ENCODE measurements at regions of chr6 and their contacts with region 1.

Region 1: DNA sequence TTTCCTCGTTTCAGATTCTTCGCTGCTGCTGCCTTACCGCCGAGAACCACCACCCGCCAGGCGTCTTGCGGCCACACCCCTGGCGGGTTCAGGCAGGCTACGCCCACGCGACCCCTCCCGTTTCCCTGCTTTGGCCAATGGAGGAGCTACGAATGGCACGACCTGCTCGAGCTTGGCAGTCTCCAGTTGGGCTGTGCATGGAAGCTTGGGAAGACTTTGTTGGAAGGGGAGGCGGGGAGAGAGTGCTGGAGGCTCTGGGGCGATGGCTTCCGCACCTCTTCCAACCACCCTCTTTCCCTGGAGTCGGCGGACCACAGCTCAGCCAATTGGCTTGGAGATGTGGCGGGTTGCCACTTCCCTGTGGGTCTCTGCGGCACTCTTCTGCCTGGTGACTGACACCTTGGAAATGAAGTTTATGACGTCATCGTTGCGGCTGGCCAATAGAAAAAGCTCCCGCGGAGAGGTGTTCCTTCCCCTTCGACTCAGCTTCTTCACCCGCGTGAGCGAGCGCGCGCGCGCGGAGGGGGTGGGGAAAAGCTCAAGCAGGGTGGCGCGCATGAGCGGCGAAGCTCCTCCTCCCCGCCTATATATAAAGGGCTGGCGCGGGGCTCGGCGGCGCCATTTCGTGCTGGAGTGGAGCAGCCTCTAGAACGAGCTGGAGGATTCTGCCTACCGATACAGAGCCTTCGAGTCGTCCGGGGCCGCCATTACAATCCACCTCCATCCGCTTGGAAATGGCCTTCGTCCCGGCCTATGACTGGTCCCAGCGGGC is 3.4 kb downstream of the BRD2 start:
- DNase-seq: peak; percentile 100
- ATAC-seq: peak; percentile 46
- H3K4me3 ChIP-seq: peak overlapping the region; percentile 93
- H3K27ac ChIP-seq: peak overlapping the region; percentile 100
- H3K4me1 ChIP-seq: peaks cover 1% of the 10 kb centered on the region; the same call in 1 of the 2 replicates
- H3K27me3 ChIP-seq: no peaks in the 10 kb centered on the region
- CTCF ChIP-seq: no peak
- EP300 ChIP-seq: peak; percentile 37; a peak in 2 of 4 replicates
- POLR2A ChIP-seq: peak; percentile 70
- RAD21 ChIP-seq: no peak

Region 2: DNA sequence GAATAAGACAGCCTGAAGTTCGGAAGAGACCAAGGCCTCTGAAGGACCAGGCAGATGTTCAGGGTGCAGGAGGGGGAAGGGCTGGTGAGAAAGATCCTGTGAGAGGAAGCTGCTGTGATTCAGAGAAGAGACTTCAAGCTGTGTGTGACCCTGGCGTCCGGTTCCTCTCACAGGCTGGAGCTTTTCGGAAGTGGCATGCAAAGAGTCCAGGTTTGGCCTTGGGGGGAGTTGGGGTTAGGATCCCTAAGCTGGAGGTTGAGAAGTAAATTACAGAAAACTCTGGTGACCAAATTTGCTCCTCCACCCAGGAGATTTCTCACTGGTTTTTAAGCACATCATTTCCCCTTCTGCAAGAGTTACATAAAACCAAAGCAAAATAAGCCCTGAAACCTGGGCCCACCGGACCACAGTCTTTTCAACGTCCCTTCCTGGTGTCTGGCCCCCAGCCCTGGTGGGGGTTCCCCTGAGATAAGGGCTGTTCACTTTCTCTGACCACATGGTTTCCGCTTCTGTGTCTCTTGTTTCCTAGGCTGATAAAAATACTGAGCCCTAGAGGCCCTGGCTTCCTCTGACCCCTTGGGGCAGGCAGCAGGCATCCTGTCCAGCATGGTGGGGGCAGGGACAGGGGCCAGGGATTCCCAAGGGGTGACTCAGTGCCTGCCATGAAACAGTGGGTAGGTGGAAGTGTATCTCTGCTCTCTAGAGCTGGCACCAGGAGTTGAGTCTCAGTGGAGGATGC is 1411.6 kb before region 1 on chr6:
- CTCF ChIA-PET with region 1: no interaction called
- POLR2A ChIA-PET with region 1: no interaction called
- RAD21 ChIA-PET with region 1: no interaction called
- SMC1A ChIA-PET with region 1: no interaction called
- in situ Hi-C with region 1: loop called (anchors 25 kb)
- intact Hi-C with region 1: no loop called
- DNase-seq: peak; percentile 88
- ATAC-seq: peak; percentile 77
- H3K4me3 ChIP-seq: peak overlapping the region; percentile 55; the same call in 1 of the 2 replicates
- H3K27ac ChIP-seq: peak overlapping the region; percentile 99
- H3K4me1 ChIP-seq: peaks cover 79% of the 10 kb centered on the region
- H3K27me3 ChIP-seq: no peaks in the 10 kb centered on the region
- CTCF ChIP-seq: 0 out of 6 replicates have a peak, but pooled peaks of 1 of the 3 experiments have one; percentile 2
- EP300 ChIP-seq: 0 out of 4 replicates have a peak, but pooled peaks of 1 of the 2 experiments have one; percentile 42
- POLR2A ChIP-seq: no peak; the same call in 1 of the 2 replicates
- RAD21 ChIP-seq: peak; percentile 1; the same call in 1 of the 2 replicates

Region 3: DNA sequence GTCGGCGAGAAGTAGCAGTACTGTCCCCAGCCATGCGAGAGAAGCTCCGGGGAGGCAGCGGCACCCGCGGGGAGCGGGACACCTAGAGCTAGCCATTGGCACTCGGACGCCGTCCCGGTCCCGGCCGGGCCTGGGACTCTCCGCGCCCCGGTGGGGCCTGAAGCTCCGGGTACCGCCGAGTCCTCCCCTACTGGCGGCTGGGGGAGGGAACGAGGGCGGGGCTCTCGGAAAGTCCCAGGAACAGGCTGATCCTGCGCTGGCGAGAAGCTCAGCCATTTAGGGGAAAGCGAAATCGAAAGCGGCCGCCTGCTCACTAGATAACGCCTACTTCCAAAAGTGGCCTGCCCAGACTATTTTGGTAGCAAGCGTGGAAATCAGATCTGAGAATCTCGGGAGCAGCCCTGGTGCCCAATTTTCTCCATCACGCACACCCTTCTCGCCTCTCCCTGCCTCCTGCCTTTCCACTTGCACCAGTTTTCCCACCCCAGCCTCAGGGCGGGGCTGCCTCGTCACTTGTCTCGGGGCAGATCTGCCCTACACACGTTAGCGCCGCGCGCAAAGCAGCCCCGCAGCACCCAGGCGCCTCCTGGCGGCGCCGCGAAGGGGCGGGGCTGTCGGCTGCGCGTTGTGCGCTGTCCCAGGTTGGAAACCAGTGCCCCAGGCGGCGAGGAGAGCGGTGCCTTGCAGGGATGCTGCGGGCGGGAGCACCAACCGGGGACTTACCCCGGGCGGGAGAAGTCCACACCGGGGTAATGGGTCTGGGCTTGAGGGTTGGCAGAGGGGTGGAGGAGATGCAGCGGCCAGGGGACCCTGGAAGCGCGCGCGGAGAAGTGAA is 118.0 kb before region 1 on chr6 and contains the starts of genes PSMB9 and TAP1:
- CTCF ChIA-PET with region 1: interaction called, 11 read pairs
- POLR2A ChIA-PET with region 1: interaction called, 36 read pairs
- RAD21 ChIA-PET with region 1: interaction called, 16 read pairs
- SMC1A ChIA-PET with region 1: interaction called, 8 read pairs
- in situ Hi-C with region 1: no loop called
- intact Hi-C with region 1: no loop called
- DNase-seq: peak; percentile 89
- ATAC-seq: peak; percentile 88
- H3K4me3 ChIP-seq: peak within 1 kb of the TSS; percentile 88
- H3K27ac ChIP-seq: peak within 1 kb of the TSS; percentile 100
- H3K4me1 ChIP-seq: peaks cover 32% of the 10 kb centered on the region
- H3K27me3 ChIP-seq: no peaks in the 10 kb centered on the region
- CTCF ChIP-seq: peak; percentile 79 to 84 (median 83)
- EP300 ChIP-seq: no peak
- POLR2A ChIP-seq: peak; percentile 83
- RAD21 ChIP-seq: peak; percentile 78
- polyA plus RNA-seq, gene PSMB9: 202 to 299 TPM
- polyA plus RNA-seq, gene TAP1: 33.4 to 60.0 TPM

Region 4: DNA sequence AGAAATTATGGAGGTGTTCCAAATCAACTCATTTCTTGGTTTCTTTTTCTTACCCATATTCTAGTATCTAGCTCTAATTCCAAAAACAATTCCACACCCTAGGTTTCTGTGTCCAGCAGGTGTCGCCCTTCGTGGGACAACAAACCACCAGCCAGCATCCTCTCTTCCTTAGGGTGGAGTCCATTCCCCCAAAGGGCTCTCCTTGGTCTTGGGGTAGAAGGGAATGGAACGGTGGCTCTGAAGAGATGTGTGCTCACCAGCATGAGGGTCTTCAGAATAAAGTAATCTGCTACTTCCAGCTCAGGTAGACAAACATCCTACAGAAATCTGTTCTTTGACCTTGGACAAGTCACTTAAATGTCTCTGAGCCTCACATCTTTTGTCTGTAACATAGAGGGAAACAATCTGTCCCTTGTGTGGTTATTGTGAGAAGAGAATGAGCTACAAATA is 38.1 kb before region 1 on chr6:
- CTCF ChIA-PET with region 1: interaction called, 48 read pairs
- POLR2A ChIA-PET with region 1: interaction called, 270 read pairs
- RAD21 ChIA-PET with region 1: interaction called, 50 read pairs
- SMC1A ChIA-PET with region 1: interaction called, 25 read pairs
- in situ Hi-C with region 1: no loop called
- intact Hi-C with region 1: no loop called
- DNase-seq: peak; percentile 38
- ATAC-seq: peak; percentile 70
- H3K4me3 ChIP-seq: no peak overlapping the region
- H3K27ac ChIP-seq: no peak overlapping the region
- H3K4me1 ChIP-seq: peaks cover 11% of the 10 kb centered on the region
- H3K27me3 ChIP-seq: no peaks in the 10 kb centered on the region; a peak in 1 of 4 replicates
- CTCF ChIP-seq: peak; percentile 75 to 85 (median 82)
- EP300 ChIP-seq: no peak
- POLR2A ChIP-seq: peak; percentile 46; the same call in 1 of the 2 replicates
- RAD21 ChIP-seq: peak; percentile 76

Region 5: GRCh38 chr6:32952817-32953739 is 18.7 kb before region 1 on chr6 and contains the start of gene HLA-DMA:
- CTCF ChIA-PET with region 1: interaction called, 243 read pairs
- POLR2A ChIA-PET with region 1: interaction called, 486 read pairs
- RAD21 ChIA-PET with region 1: interaction called, 224 read pairs
- SMC1A ChIA-PET with region 1: interaction called, 347 read pairs
- in situ Hi-C with region 1: no loop called
- intact Hi-C with region 1: loop called (anchors 2 kb)
- DNase-seq: peak; percentile 99
- ATAC-seq: peak; percentile 94
- H3K4me3 ChIP-seq: peak within 1 kb of the TSS; percentile 98
- H3K27ac ChIP-seq: peak within 1 kb of the TSS; percentile 90
- H3K4me1 ChIP-seq: peaks cover 44% of the 10 kb centered on the region
- H3K27me3 ChIP-seq: no peaks in the 10 kb centered on the region
- CTCF ChIP-seq: peak; percentile 71 to 77 (median 74)
- EP300 ChIP-seq: peak; percentile 32 to 67; a peak in 3 of 4 replicates
- POLR2A ChIP-seq: peak; percentile 98
- RAD21 ChIP-seq: peak; percentile 46
- polyA plus RNA-seq, gene HLA-DMA: 389 to 552 TPM

Region 6: DNA sequence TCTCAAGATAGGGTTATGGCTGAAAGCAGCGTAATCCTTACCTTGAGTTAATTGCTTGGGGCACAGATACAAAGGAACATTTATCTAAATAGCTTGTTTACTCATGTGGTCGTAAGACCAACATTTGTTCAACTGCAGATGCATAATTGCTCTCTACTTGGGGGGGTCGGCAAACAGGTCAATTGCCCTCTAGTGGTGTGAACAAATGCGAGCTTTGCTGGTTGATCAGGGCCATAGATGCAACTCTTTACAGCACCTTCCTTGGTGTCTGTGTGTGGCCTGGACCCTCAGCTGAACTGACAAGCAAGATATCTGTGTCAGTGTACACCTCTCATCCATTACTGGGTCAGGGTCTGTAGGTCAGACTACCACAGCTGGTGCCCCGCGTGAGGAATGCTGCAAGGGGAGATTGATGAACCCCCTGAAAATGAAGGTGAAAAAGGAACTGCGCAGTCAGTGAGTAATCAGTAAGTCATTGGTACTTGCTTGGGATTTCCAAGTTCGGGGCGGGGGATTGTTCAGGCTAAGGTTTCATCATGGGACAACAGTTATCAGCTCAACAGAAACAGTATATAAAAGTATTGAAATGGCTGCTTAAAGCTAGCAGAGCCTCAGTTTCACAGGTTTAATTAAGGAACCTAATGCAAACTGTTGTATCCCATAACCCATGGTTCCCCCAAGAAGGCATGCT is 77.7 kb after region 1 on chr6:
- CTCF ChIA-PET with region 1: no interaction called
- POLR2A ChIA-PET with region 1: no interaction called
- RAD21 ChIA-PET with region 1: no interaction called
- SMC1A ChIA-PET with region 1: no interaction called
- in situ Hi-C with region 1: no loop called
- intact Hi-C with region 1: no loop called
- DNase-seq: no peak
- ATAC-seq: peak; percentile 85
- H3K4me3 ChIP-seq: no peak overlapping the region
- H3K27ac ChIP-seq: no peak overlapping the region
- H3K4me1 ChIP-seq: no peaks in the 10 kb centered on the region
- H3K27me3 ChIP-seq: no peaks in the 10 kb centered on the region
- CTCF ChIP-seq: peak; percentile 23 to 54 (median 53)
- EP300 ChIP-seq: no peak
- POLR2A ChIP-seq: no peak
- RAD21 ChIP-seq: peak; percentile 43; the same call in 1 of the 2 replicates

Region 7: DNA sequence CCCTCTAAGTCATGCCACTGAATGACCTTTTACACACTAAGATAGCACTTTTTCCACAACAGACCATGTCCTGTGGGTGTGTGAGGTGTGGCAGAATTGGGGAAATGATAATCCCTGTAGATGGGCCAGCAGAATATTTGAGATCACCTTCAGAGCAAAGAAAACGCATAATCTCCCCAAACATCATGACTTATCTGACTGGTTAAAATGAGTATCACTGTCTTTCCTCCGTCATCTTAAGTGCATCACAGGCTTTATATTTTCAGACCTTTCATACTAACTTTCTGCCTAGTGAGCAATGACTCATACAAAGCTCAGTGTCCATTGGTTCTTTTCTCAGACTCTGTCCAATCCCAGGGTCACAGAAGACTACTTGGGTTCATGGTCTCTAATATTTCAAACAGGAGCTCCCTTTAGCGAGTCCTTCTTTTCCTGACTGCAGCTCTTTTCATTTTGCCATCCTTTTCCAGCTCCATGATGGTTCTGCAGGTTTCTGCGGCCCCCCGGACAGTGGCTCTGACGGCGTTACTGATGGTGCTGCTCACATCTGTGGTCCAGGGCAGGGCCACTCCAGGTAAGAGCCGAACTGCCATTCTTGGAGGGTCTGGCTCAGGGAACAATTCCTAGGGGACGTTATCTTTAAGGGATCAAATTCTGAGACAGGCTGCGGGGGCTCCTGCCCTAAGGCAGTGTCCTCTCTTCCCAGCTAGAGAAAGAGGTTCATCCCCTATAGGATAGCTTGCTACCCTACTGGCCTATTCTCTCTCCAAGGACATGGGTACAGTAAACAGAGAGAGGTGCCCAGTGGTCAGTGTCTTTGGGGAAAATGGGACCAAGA is 104.0 kb after region 1 on chr6 and contains the start of gene HLA-DPB1:
- CTCF ChIA-PET with region 1: interaction called, 3 read pairs
- POLR2A ChIA-PET with region 1: interaction called, 61 read pairs
- RAD21 ChIA-PET with region 1: interaction called, 12 read pairs
- SMC1A ChIA-PET with region 1: interaction called, 11 read pairs
- in situ Hi-C with region 1: no loop called
- intact Hi-C with region 1: no loop called
- DNase-seq: peak; percentile 96
- ATAC-seq: peak; percentile 81
- H3K4me3 ChIP-seq: peak within 1 kb of the TSS; percentile 82
- H3K27ac ChIP-seq: peak within 1 kb of the TSS; percentile 99
- H3K4me1 ChIP-seq: peaks cover 22% of the 10 kb centered on the region
- H3K27me3 ChIP-seq: no peaks in the 10 kb centered on the region
- CTCF ChIP-seq: no peak
- EP300 ChIP-seq: no peak
- POLR2A ChIP-seq: peak; percentile 89
- RAD21 ChIP-seq: no peak
- polyA plus RNA-seq, gene HLA-DPB1: 101 to 177 TPM